Activated CD4-positive, alpha-beta memory T cell treated with anti-CD3 and anti-CD28 coated beads for 36 hours (primary cell): ENCODE measurements at regions of chr2 and their contacts with region 1.

Region 1: GRCh38 chr2:241762933-241763369 is 13.7 kb upstream of the GAL3ST2 start:
- DNase-seq: peak; percentile 85
- H3K4me3 Mint-ChIP-seq: peak overlapping the region; percentile 44
- H3K27ac Mint-ChIP-seq: peak overlapping the region; percentile 89
- H3K4me1 Mint-ChIP-seq: peaks cover 38% of the 10 kb centered on the region
- H3K27me3 Mint-ChIP-seq: no peaks in the 10 kb centered on the region

Region 2: DNA sequence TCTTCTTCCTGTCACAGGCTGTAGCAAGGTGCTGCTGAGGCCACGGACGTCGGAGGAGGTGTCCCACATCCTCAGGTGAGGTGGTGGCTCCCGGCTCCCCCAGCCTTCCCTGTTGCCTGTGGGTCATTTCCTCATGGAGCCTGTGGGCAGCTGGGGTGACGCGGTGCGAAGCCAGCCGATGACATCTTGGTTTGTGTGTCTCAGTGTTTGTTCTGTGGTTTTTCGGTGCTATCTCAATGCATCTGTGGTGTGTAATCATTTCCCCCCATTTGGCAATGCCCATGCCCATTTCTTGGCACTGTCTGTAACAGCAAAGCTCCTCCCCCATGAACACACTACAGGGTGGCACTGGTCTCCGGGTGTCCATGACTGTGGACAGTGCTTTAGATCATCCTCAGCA is 21.9 kb before region 1 on chr2:
- CTCF ChIA-PET with region 1: interaction called, 10 read pairs
- POLR2A ChIA-PET with region 1: interaction called, 13 read pairs
- intact Hi-C with region 1: loop called (anchors 2 kb)
- DNase-seq: peak; percentile 72
- H3K4me3 Mint-ChIP-seq: no peak overlapping the region
- H3K27ac Mint-ChIP-seq: peak overlapping the region; percentile 56
- H3K4me1 Mint-ChIP-seq: peaks cover 36% of the 10 kb centered on the region
- H3K27me3 Mint-ChIP-seq: no peaks in the 10 kb centered on the region

Region 3: DNA sequence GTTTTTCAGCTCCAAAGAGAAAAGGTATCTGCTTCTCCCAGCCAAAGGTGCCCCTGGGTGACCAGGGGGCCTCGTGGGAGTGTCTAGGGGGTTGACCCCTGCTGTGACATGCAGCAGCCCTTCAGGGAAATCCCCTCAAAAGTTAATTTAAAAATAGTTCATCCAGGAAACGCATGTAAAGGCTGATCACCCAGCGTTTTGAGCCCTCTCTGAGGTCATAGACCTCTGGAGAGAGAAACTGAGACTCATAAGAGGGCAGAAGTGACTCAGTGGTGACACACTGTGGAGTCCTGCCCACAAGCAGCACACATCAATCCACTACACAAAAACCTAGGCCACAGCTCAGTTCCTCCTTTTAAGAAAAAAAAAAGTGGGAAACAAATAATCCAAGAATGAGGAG is 25.6 kb after region 1 on chr2:
- CTCF ChIA-PET with region 1: interaction called, 3 read pairs
- POLR2A ChIA-PET with region 1: interaction called, 6 read pairs
- intact Hi-C with region 1: loop called (anchors 2 kb)
- DNase-seq: peak; percentile 74
- H3K4me3 Mint-ChIP-seq: no peak overlapping the region
- H3K27ac Mint-ChIP-seq: peak overlapping the region; percentile 59
- H3K4me1 Mint-ChIP-seq: peaks cover 19% of the 10 kb centered on the region
- H3K27me3 Mint-ChIP-seq: peaks cover 2% of the 10 kb centered on the region

Region 4: DNA sequence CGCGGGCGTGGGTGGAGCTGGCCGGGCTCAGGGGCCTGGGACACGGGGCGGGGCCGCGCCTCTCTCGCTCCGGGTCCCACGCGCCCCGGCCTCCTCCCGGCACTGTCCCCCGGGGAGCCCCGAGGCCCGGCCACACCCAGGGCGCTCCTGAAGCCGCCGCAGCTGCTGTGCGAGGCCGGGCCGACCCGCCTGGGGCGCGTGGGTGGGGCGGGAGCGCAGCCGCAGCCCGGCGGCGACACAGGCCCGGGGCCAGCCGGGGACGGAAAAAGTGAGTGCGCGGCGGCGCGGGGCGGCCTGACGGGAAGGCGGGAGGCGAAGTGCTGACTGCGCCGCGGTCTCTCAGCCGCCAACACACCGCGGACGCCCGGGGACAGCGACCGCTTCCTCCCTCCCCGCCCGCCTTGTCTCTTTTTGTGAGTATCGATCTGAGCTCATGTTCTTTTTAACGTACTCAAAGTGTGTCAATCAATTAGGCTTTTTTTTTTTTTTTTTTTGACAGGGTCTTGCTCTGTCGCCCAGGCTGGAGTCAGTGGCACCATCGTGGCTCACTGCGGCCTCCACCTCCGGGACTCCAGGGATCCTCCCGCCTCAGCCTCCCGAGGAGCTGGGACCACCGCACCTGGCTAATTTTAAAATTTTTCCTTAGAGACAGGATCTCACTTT is 81.2 kb after region 1 on chr2:
- CTCF ChIA-PET with region 1: no interaction called
- POLR2A ChIA-PET with region 1: interaction called, 11 read pairs
- intact Hi-C with region 1: loop called (anchors 2 kb)
- DNase-seq: peak; percentile 94
- H3K4me3 Mint-ChIP-seq: peak overlapping the region; percentile 72
- H3K27ac Mint-ChIP-seq: peak overlapping the region; percentile 82
- H3K4me1 Mint-ChIP-seq: peaks cover 39% of the 10 kb centered on the region
- H3K27me3 Mint-ChIP-seq: peaks cover 5% of the 10 kb centered on the region